H1 (cell line): ENCODE measurements at regions of chr18 and their contacts with region 1.

Region 1: DNA sequence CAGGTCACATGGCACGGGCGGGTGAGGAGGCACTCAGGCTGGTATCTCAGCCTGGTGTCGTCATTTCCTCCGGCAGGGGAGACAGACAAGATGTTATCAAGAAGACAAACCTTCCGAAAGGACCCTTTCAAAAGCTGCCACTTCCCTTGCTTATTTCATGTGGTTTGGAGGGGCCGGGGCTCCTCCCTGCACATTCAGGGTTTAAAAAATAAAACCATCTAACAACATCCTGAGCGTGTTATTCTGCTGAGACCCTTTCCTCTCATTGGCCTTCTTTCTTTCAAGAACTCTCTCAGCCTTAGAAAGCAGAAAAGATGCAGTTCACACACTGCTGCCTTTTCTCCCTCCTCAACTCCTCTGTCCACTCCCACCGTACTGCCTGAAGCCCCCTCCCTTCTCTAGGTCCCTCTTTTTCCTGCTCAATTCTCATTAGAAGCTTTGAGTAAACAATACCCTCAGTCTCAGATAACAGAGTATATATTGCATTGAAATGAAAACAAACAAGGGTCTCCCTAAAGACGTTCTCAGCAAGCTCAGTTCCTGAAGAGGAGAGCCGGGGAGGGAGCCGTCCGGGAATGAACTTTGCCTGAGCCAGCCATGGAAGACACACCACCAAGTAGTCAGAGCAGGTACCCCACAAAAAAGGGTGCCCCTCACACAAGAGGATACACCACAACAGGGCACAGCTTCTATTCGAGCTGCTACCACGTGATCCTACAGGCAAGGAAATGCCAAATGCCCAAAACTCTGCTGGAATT is 9.7 kb downstream of the SMAD7 start:
- DNase-seq: no peak
- H3K4me3 ChIP-seq: no peak overlapping the region
- H3K27ac ChIP-seq: no peak overlapping the region
- H3K4me1 ChIP-seq: peaks cover 12 to 47% (median 28%) of the 10 kb centered on the region in 4 experiments
- H3K27me3 ChIP-seq: no peaks in the 10 kb centered on the region; a peak in 2 of 7 replicates
- CTCF ChIP-seq: no peak
- EP300 ChIP-seq: no peak
- POLR2A ChIP-seq: no peak
- RAD21 ChIP-seq: no peak

Region 2: GRCh38 chr18:48928787-48929186 is 12.2 kb before region 1 on chr18:
- CTCF ChIA-PET with region 1: interaction called, 7 read pairs
- POLR2A ChIA-PET with region 1: interaction called, 18 read pairs
- DNase-seq: no peak
- H3K4me3 ChIP-seq: no peak overlapping the region
- H3K27ac ChIP-seq: no peak overlapping the region
- H3K4me1 ChIP-seq: peaks cover 22 to 59% (median 41%) of the 10 kb centered on the region in 4 experiments
- H3K27me3 ChIP-seq: no peaks in the 10 kb centered on the region; a peak in 1 of 7 replicates
- CTCF ChIP-seq: no peak
- EP300 ChIP-seq: no peak
- POLR2A ChIP-seq: no peak
- RAD21 ChIP-seq: no peak

Region 3: DNA sequence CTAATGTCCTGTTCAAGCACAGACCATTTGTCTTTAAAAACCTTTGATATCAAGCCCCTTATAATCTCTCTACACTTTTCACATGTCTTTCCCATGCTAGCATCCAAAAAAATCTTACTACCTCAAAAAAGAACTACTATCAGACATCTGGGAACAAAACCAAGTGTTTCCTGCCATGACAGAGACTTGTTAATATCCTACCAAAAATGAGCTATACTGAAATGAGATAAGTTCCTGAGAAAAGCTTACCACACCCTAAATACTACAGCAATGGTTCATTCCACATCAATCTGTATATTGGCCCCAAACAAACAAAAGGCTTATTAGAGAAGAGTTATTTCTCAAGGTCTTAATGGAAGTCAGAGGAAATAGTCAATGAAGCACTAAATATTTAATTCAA is 289.3 kb after region 1 on chr18:
- CTCF ChIA-PET with region 1: no interaction called
- POLR2A ChIA-PET with region 1: no interaction called
- DNase-seq: no peak
- H3K4me3 ChIP-seq: no peak overlapping the region
- H3K27ac ChIP-seq: no peak overlapping the region
- H3K4me1 ChIP-seq: no peaks in the 10 kb centered on the region
- H3K27me3 ChIP-seq: no peaks in the 10 kb centered on the region
- CTCF ChIP-seq: no peak
- EP300 ChIP-seq: no peak
- POLR2A ChIP-seq: no peak
- RAD21 ChIP-seq: no peak